Prostate gland (tissue), 2 donors: ENCODE measurements at regions of chr6 and their contacts with region 1.

Region 1: GRCh38 chr6:144582939-144583613 is 297.9 kb downstream of the UTRN start:
- DNase-seq: peak; percentile 12
- H3K4me3 ChIP-seq: no peak overlapping the region
- H3K27ac ChIP-seq: no peak overlapping the region
- H3K4me1 ChIP-seq: no peaks in the 10 kb centered on the region
- H3K27me3 ChIP-seq: no peaks in the 10 kb centered on the region
- CTCF ChIP-seq: no peak
- POLR2A ChIP-seq: no peak

Region 2: DNA sequence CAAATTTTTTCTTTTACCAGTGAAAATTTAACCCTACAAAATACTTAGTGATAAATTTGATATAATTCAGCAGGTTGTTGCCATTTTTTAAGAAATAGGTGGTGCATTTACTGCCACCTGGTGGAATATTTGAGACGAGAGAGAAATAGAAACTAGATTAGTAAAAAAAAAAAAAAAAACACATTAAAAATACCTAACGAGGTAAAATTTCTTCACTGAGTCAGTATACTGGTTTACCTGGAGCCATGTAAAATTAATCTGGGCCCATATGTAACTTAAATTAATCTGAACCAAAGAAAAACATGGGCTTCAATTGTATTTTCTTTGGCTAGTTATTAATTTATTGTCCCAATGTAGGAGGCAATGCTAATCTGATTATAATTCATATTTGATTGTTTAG is 631.5 kb after region 1 on chr6:
- intact Hi-C with region 1: loop called (anchors 10 kb)
- DNase-seq: peak; percentile 21
- H3K4me3 ChIP-seq: no peak overlapping the region
- H3K27ac ChIP-seq: no peak overlapping the region
- H3K4me1 ChIP-seq: no peaks in the 10 kb centered on the region
- H3K27me3 ChIP-seq: no peaks in the 10 kb centered on the region
- CTCF ChIP-seq: peak; percentile 20 to 67 (median 42)
- POLR2A ChIP-seq: no peak